ENCODE measurements at regions of chr4 and their contacts with region 1.

Region 1: GRCh38 chr4:120156120-120156718 is 89.6 kb upstream of the MAD2L1 start:
- DNase-seq: peak; percentile 29
- ATAC-seq: no peak
- H3K4me3 Mint-ChIP-seq: no peak overlapping the region
- H3K27ac Mint-ChIP-seq: no peak overlapping the region
- H3K4me1 Mint-ChIP-seq: no peaks in the 10 kb centered on the region
- H3K27me3 Mint-ChIP-seq: no peaks in the 10 kb centered on the region

Region 2: DNA sequence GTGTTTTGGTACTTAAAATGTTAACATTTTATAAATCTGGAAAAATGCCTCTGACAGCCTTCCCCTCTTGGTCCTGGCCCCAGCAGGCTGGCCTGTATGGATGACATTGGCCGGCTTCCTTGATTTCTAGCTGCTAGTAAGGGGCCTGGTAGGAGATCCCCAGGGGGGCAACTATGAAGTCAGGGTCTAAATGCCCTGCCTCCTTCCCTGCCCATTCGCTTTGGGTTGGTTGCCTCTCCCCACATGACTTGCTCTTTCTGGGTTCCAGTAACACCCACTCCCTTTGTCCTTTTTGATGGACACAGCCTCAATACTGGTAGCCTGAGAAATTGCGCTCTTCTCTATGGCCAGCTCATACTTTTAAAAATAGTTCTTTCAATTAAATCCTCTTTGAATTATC is 11.6 kb before region 1 on chr4:
- CTCF ChIA-PET with region 1: interaction called, 10 read pairs
- POLR2A ChIA-PET with region 1: no interaction called
- intact Hi-C with region 1: no loop called
- DNase-seq: no peak
- ATAC-seq: no peak
- H3K4me3 Mint-ChIP-seq: no peak overlapping the region
- H3K27ac Mint-ChIP-seq: no peak overlapping the region
- H3K4me1 Mint-ChIP-seq: no peaks in the 10 kb centered on the region
- H3K27me3 Mint-ChIP-seq: no peaks in the 10 kb centered on the region

Region 3: DNA sequence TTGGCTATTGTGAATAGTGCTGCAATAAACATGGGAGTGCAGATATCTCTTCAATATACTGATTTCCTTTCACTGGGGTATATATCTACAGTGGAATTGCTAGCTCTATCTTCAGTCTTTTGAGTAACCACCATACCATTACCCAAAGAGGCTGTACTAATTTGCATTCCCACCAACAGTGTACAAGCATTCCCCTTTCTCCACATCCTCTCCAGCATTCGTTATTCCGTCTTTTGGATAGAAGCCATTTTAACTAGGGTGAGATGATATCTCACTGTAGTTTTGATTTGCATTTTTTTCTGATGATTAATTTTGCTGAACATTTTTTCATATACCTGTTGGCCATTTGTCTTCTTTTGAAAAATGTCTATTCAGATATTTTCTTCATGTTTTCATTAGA is 656.0 kb after region 1 on chr4:
- CTCF ChIA-PET with region 1: no interaction called
- POLR2A ChIA-PET with region 1: no interaction called
- intact Hi-C with region 1: loop called in 1 of 2 experiments (anchors 5 kb)
- DNase-seq: no peak
- ATAC-seq: no peak
- H3K4me3 Mint-ChIP-seq: no peak overlapping the region
- H3K27ac Mint-ChIP-seq: no peak overlapping the region
- H3K4me1 Mint-ChIP-seq: no peaks in the 10 kb centered on the region
- H3K27me3 Mint-ChIP-seq: peaks cover 4% of the 10 kb centered on the region

Region 4: DNA sequence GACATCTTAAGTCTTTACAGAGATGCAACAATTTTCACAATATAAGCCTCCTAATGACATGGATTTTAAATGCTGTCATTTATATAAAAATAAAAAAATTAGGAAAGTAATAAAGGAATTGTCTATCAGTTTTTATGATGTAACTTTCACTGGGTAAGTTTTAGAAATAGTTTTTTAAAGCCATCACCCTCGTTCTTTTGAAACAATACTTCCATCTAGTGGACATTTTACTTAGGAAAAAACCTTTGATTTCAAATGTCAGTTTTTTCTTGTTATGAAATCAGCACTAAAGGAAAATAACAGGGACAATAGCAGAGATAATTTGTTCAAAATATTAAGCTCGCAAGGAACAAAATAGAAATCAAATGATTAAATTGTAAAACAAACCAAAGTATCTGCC is 940.4 kb after region 1 on chr4:
- CTCF ChIA-PET with region 1: interaction called, 4 read pairs
- POLR2A ChIA-PET with region 1: no interaction called
- intact Hi-C with region 1: loop called (anchors 1 kb)
- DNase-seq: no peak
- ATAC-seq: no peak
- H3K4me3 Mint-ChIP-seq: no peak overlapping the region
- H3K27ac Mint-ChIP-seq: no peak overlapping the region
- H3K4me1 Mint-ChIP-seq: no peaks in the 10 kb centered on the region
- H3K27me3 Mint-ChIP-seq: no peaks in the 10 kb centered on the region

Measured in activated CD4-positive, alpha-beta T cell treated with anti-CD3 and anti-CD28 coated beads for 36 hours (primary cell).